IMR-90 (cell line): ENCODE measurements at regions of chr7 and their contacts with region 1.

Region 1: DNA sequence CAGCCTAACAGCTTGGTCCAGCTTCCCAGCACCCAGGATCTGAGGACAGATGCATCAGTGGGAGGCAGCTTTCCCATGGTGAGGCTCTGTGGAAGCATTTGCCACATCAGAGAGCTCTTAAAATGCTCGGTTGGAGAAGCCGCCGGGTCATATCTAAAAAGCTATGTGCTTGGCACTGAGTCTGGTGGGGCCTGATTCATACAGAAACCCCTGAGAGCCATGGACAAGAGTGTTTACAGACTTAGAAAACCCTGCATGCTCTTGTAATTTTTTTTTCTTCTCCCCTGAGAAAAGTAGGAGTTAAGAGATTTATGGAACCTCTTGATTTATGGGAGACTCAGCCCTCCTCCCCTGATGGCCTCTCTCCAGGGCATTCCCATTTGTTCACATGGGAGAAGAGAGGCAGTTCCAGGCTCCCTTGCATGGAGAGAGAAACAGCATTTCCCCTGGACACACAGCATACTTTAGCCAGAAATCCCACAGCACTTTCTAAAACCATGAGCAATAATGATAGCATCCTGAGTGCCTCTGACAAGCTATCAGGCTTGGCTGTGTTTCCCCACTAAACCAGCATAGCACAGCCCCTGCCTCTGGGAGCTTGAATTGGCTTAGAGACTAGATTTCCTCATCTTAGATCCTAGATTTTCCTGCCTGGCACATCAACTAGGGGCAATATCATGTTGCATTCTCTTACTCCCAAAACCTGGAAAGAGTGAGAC is 322.1 kb upstream of the AUTS2 start:
- DNase-seq: no peak
- ATAC-seq: no peak
- H3K4me3 ChIP-seq: no peak overlapping the region
- H3K27ac ChIP-seq: no peak overlapping the region
- H3K4me1 ChIP-seq: no peaks in the 10 kb centered on the region
- H3K27me3 ChIP-seq: no peaks in the 10 kb centered on the region
- CTCF ChIP-seq: no peak
- POLR2A ChIP-seq: no peak
- RAD21 ChIP-seq: no peak

Region 2: DNA sequence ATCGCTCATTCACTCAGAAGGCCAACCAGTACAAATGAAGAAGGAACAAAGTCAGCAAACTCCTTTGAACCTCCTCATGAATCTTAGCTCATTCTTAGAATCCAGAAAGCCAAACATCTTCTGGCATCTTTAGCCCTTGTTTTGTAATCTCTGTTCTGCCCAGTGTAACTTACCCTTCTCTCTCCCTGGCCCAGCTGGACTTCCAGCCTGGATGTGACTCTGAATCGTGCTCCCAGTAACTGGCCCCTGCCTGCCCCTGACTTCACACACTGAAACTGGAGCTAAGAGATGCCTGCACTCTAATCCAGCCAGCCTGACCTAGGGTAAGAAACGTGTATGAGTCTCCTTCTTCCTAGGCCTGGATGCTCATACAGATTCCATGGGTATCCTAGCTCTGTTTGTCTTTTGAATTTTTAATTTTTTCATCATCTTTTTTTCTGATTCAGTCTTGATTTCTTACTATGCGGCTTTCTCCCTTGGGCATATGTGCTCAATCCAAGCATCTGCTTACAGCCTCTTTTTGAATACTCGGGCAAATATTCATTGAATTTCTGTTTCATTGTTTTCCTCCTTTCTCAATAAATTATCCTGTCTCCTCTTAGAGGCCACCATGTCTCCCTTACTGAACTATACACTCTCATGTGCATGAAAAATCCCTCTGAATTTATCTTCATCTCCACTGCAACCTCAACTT is 523.5 kb before region 1 on chr7:
- CTCF ChIA-PET with region 1: no interaction called
- POLR2A ChIA-PET with region 1: no interaction called
- dilution Hi-C with region 1: no loop called
- in situ Hi-C with region 1: no loop called
- intact Hi-C with region 1: no loop called
- DNase-seq: no peak
- ATAC-seq: no peak
- H3K4me3 ChIP-seq: no peak overlapping the region
- H3K27ac ChIP-seq: no peak overlapping the region
- H3K4me1 ChIP-seq: no peaks in the 10 kb centered on the region
- H3K27me3 ChIP-seq: no peaks in the 10 kb centered on the region
- CTCF ChIP-seq: no peak
- POLR2A ChIP-seq: no peak
- RAD21 ChIP-seq: no peak

Region 3: GRCh38 chr7:69338144-69338543 is 62.0 kb after region 1 on chr7:
- CTCF ChIA-PET with region 1: no interaction called
- POLR2A ChIA-PET with region 1: no interaction called
- dilution Hi-C with region 1: no loop called
- in situ Hi-C with region 1: no loop called
- intact Hi-C with region 1: loop called (anchors 10 kb)
- DNase-seq: no peak
- ATAC-seq: no peak
- H3K4me3 ChIP-seq: no peak overlapping the region
- H3K27ac ChIP-seq: no peak overlapping the region
- H3K4me1 ChIP-seq: no peaks in the 10 kb centered on the region
- H3K27me3 ChIP-seq: no peaks in the 10 kb centered on the region
- CTCF ChIP-seq: no peak
- POLR2A ChIP-seq: no peak
- RAD21 ChIP-seq: no peak